ENCODE measurements at regions of chr1 and their contacts with region 1.

Region 1: DNA sequence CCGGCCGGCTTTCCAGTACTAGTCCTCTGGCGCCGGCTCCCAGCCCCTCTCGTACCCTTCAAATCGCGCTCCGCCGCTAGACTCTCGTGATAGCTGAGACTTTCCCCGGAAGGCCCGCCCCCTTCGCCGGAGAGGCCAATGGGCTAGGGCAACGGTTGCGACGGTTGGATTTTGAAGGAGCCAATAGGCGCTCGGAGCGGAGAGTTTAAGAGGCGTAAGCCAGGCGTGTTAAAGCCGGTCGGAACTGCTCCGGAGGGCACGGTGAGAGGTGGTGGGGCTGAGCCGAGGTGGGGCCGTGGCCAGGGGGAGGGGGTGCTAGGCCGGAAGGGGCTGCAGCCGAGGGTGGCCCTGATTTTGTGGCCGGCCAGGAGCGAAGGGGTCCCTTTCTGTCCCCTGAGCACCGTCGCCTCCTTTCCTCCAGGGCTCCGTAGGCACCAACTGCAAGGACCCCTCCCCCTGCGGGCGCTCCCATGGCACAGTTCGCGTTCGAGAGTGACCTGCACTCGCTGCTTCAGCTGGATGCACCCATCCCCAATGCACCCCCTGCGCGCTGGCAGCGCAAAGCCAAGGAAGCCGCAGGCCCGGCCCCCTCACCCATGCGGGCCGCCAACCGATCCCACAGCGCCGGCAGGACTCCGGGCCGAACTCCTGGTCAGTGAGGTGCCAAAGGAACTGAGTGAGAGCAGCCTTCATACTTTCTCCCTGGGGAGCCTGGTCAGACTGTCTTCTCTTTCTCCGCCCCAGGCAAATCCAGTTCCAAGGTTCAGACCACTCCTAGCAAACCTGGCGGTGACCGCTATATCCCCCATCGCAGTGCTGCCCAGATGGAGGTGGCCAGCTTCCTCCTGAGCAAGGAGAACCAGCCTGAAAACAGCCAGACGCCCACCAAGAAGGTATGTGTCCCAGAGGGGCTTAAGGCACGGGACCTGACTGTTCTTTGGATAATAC is at the start of gene CDC20:
- DNase-seq: peak; percentile 93 to 99 (median 97)
- ATAC-seq: peak; percentile 98
- H3K4me3 ChIP-seq: peak within 1 kb of the TSS; percentile 79 to 92
- H3K4me3 Mint-ChIP-seq: peak within 1 kb of the TSS; percentile 89
- H3K27ac ChIP-seq: peak within 1 kb of the TSS; percentile 62 to 76
- H3K27ac Mint-ChIP-seq: peak within 1 kb of the TSS; percentile 87
- H3K4me1 ChIP-seq: peaks cover 12% of the 10 kb centered on the region
- H3K4me1 Mint-ChIP-seq: peaks cover 15% of the 10 kb centered on the region
- H3K27me3 ChIP-seq: no peaks in the 10 kb centered on the region
- H3K27me3 Mint-ChIP-seq: no peaks in the 10 kb centered on the region
- CTCF ChIP-seq: no peak
- total RNA-seq, gene CDC20: 0.92 to 1.3 TPM

Region 2: DNA sequence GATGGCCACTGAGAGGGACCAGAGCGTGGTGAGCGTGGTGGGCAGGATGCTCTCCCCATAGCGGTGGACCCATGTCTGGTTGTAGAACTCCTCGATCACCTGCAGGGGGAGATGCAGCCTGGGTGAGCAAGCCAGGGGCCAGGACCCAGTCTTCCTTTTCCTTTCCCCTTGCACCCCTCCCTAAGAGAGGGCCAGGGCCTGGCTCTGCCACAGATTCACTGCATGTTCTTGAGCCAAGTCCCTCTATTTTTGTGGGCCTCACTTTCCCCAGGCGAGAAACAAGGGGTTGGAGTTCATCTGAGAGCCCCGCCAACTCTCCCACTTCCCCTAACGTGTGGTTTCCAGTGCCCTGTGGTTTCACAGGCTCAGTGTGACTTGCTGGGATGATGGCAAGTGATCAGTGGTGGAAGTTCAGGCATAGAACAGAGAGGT is 427.9 kb before region 1 on chr1:
- CTCF ChIA-PET with region 1: no interaction called
- POLR2A ChIA-PET with region 1: no interaction called
- intact Hi-C with region 1: loop called (anchors 10 kb)
- DNase-seq: peak in 7 of 9 experiments; percentile 46 to 89 (median 67)
- ATAC-seq: peak; percentile 49
- H3K4me3 ChIP-seq: peak overlapping the region; percentile 22 to 43
- H3K4me3 Mint-ChIP-seq: peak overlapping the region; percentile 70
- H3K27ac ChIP-seq: peak overlapping the region; percentile 63 to 90
- H3K27ac Mint-ChIP-seq: peak overlapping the region; percentile 95
- H3K4me1 ChIP-seq: peaks cover 67% of the 10 kb centered on the region
- H3K4me1 Mint-ChIP-seq: peaks cover 67% of the 10 kb centered on the region
- H3K27me3 ChIP-seq: no peaks in the 10 kb centered on the region
- H3K27me3 Mint-ChIP-seq: no peaks in the 10 kb centered on the region
- CTCF ChIP-seq: peak; percentile 57

Region 3: GRCh38 chr1:43348809-43349583 is 10.0 kb before region 1 on chr1:
- CTCF ChIA-PET with region 1: no interaction called
- POLR2A ChIA-PET with region 1: no interaction called
- intact Hi-C with region 1: loop called (anchors 1 kb)
- DNase-seq: peak; percentile 10 to 90 (median 71)
- ATAC-seq: peak; percentile 85
- H3K4me3 ChIP-seq: peak overlapping the region; percentile 43 to 44
- H3K4me3 Mint-ChIP-seq: peak overlapping the region; percentile 76
- H3K27ac ChIP-seq: peak overlapping the region; percentile 69 to 73
- H3K27ac Mint-ChIP-seq: peak overlapping the region; percentile 90
- H3K4me1 ChIP-seq: no peaks in the 10 kb centered on the region
- H3K4me1 Mint-ChIP-seq: peaks cover 13% of the 10 kb centered on the region
- H3K27me3 ChIP-seq: no peaks in the 10 kb centered on the region
- H3K27me3 Mint-ChIP-seq: no peaks in the 10 kb centered on the region
- CTCF ChIP-seq: no peak

Region 4: DNA sequence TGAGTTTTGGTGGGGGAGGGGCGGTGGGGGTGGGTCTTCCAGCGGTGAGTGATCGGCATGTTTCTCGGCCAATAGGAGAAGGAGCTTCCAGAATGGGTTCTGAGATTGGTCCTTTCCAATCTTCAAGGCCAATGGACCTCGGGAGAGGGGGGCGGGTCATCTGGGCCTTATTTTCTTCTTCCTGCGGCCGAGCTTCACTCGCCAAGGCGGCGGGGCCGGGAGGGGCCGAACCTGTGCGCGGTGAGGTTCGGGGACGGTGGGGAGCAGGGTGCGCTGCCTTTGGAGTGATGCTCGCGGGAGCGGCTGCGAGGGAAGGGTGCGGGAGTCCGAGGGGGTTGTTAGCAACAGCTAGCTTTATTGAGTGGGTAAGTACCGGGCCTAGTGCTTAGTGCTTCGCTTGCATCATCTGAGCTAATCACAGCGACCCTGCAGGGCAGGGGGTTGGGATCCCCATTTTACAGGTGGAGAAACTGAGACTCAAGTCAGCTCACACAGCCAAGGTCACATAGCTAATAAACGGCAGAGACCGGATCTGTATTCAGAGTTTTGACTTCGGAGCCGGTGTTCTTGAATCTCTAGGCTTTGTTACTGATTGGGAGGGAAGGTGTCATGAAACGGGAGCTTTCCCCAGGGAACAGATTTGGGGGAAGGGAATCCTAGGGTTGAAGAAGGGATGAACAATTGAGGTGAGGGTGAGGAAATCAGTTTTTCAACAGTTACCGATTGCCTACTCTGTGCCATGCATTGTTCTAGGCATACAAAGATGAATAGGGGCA is 291.5 kb after region 1 on chr1:
- CTCF ChIA-PET with region 1: no interaction called
- POLR2A ChIA-PET with region 1: no interaction called
- intact Hi-C with region 1: loop called in 1 of 2 experiments (anchors 5 kb)
- DNase-seq: peak in 8 of 9 experiments; percentile 74 to 97 (median 89)
- ATAC-seq: peak; percentile 71
- H3K4me3 ChIP-seq: peak overlapping the region; percentile 87 to 92
- H3K4me3 Mint-ChIP-seq: peak overlapping the region; percentile 100
- H3K27ac ChIP-seq: peak overlapping the region; percentile 49 to 86
- H3K27ac Mint-ChIP-seq: peak overlapping the region; percentile 97
- H3K4me1 ChIP-seq: peaks cover 17% of the 10 kb centered on the region
- H3K4me1 Mint-ChIP-seq: peaks cover 41% of the 10 kb centered on the region
- H3K27me3 ChIP-seq: no peaks in the 10 kb centered on the region
- H3K27me3 Mint-ChIP-seq: no peaks in the 10 kb centered on the region
- CTCF ChIP-seq: no peak

Region 5: DNA sequence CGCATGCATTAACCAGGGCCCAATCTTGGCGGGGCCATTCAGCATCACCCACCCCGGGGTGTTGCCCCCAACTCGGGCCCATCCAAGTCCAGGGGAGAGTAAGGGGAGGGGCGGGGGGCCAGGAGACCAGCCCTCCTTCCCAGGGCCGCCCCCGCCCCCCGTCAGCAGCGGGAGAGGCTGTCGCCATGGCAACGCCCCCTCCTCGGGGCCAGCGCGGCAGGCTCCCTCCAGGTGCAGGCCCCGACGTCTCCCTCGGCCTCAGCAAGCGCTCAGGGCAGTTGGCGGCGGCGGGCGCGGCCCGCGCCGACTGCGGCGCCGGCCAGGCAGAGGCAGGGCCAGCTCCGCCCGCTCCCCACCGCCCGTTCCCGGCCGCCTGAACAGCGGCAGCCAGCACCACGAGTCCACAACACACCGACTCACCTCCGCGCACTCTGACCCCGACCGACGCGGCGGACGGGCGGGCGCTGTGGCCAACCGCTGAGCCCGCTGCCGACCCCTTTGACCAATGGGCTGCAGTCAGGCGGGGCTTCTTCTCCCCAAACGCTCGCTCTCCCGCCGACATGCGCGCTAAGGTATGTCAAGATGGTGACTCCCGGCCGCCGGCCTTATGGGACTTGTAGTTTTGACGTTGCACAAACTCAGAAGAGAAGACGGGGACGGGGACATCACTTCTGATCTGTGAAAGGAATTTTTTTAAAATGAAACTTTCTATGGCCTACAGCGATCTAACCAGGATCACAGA is 996.0 kb after region 1 on chr1 and contains the start of gene ERI3:
- CTCF ChIA-PET with region 1: no interaction called
- POLR2A ChIA-PET with region 1: no interaction called
- intact Hi-C with region 1: loop called in 1 of 2 experiments (anchors 2 kb)
- DNase-seq: peak; percentile 91 to 98 (median 96)
- ATAC-seq: peak; percentile 99
- H3K4me3 ChIP-seq: peak within 1 kb of the TSS; percentile 56 to 64
- H3K4me3 Mint-ChIP-seq: peak within 1 kb of the TSS; percentile 95
- H3K27ac ChIP-seq: peak within 1 kb of the TSS; percentile 37 to 60
- H3K27ac Mint-ChIP-seq: peak within 1 kb of the TSS; percentile 93
- H3K4me1 ChIP-seq: peaks cover 20% of the 10 kb centered on the region
- H3K4me1 Mint-ChIP-seq: peaks cover 38% of the 10 kb centered on the region
- H3K27me3 ChIP-seq: no peaks in the 10 kb centered on the region
- H3K27me3 Mint-ChIP-seq: no peaks in the 10 kb centered on the region
- CTCF ChIP-seq: no peak
- total RNA-seq, gene ERI3: 17.3 to 20.0 TPM

Measured in CD8-positive, alpha-beta T cell (primary cell).